Mammary epithelial cell (primary cell): ENCODE measurements at regions of chr3 and their contacts with region 1.

Region 1: DNA sequence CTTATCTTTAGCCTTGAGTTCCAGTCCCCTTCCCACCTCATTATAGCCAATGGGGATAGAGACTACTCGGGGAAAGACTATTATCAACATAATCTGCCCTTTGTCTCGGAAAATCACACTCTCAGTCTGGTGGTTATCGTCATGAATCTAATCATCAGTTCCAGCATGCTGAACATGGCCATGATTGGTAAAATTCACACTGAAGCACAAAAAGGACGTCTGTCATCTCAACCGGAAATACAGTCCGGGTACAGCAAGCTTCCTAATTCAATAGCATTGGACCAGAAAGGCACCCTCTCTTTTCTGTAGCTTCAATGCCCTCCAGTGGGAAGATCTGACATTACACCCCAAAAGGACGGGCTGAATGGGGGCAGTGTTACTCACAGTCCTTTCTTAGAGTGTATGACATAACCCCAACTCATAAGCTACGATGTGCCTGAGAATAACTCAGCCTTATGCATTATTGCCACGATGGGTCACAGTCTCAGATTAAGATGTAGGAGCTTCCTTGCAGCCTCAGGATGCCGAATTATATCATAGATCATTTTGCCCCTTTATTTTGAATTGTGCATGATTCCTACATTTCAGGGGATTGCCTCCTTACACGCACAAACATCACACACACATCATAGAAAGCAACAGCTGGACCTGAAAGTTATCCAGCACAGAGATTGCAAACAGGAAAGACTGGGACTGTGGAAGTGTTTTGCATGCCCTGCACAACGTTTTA is 390.4 kb upstream of the LMCD1 start:
- DNase-seq: peak; percentile 72
- H3K4me3 ChIP-seq: no peak overlapping the region
- H3K27ac ChIP-seq: no peak overlapping the region
- H3K4me1 ChIP-seq: no peaks in the 10 kb centered on the region
- H3K27me3 ChIP-seq: peaks cover 1% of the 10 kb centered on the region
- CTCF ChIP-seq: peak; percentile 69 to 78

Region 2: DNA sequence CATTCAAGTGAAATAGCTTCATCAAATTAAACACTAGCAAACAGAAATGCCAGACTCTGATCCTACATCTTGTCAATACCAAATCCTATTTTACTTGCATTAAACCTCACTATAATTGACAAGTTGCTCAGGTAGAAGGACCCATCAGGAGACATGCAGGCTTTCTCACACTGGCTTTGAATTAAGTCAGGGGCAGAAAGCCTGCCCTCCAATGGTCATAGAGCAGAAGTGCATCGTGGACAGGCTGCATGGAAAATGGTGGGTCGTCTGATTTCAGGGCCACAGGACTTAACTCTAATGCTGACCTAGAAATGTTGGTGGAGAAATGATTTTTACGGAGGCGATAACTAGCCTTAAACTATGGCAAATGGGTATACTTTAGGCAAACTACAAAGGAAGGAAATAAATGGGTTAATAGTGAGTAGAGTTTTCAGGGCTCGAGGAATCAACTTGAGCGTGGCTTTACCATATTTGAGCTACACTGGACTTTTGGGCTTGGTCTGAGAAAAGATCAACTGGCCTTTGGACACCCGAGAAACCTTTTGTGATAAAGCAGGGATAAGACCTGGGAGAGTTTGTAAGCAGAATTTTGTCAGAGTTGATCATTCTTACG is 966.4 kb before region 1 on chr3:
- CTCF ChIA-PET with region 1: no interaction called
- dilution Hi-C with region 1: no loop called
- in situ Hi-C with region 1: no loop called
- intact Hi-C with region 1: loop called (anchors 10 kb)
- DNase-seq: peak; percentile 12
- H3K4me3 ChIP-seq: no peak overlapping the region
- H3K27ac ChIP-seq: no peak overlapping the region
- H3K4me1 ChIP-seq: no peaks in the 10 kb centered on the region
- H3K27me3 ChIP-seq: no peaks in the 10 kb centered on the region
- CTCF ChIP-seq: peak; percentile 49 to 66

Region 3: GRCh38 chr3:7393944-7394605 is 717.2 kb before region 1 on chr3:
- CTCF ChIA-PET with region 1: no interaction called
- dilution Hi-C with region 1: no loop called
- in situ Hi-C with region 1: no loop called
- intact Hi-C with region 1: loop called (anchors 2 kb)
- DNase-seq: no peak
- H3K4me3 ChIP-seq: no peak overlapping the region
- H3K27ac ChIP-seq: no peak overlapping the region
- H3K4me1 ChIP-seq: no peaks in the 10 kb centered on the region
- H3K27me3 ChIP-seq: no peaks in the 10 kb centered on the region
- CTCF ChIP-seq: no peak

Region 4: DNA sequence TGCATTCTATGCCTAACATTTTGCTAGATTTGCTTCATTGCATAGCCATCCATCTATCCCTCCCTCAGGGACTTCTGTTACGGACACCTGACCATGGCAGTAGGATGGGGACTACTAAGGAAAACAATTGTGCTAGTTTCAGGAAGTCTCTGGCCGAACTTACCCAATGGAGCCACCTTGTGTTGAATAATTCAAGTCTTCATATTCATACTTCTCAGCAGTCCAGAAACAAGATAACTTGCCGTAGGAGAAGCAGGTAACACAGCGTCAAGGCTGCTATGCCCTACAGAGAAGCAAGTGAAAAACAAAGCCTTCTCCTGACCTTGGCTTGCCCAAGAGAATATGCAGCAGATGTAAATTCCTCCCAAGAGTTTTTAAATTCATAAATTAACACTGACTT is 565.0 kb before region 1 on chr3:
- CTCF ChIA-PET with region 1: no interaction called
- dilution Hi-C with region 1: no loop called
- in situ Hi-C with region 1: no loop called
- intact Hi-C with region 1: loop called (anchors 2 kb)
- DNase-seq: peak; percentile 24
- H3K4me3 ChIP-seq: no peak overlapping the region
- H3K27ac ChIP-seq: no peak overlapping the region
- H3K4me1 ChIP-seq: no peaks in the 10 kb centered on the region
- H3K27me3 ChIP-seq: no peaks in the 10 kb centered on the region
- CTCF ChIP-seq: peak in 1 of 2 donors; percentile 34

Region 5: GRCh38 chr3:8301728-8302462 is 190.7 kb after region 1 on chr3:
- CTCF ChIA-PET with region 1: interaction called, 3 read pairs
- dilution Hi-C with region 1: no loop called
- in situ Hi-C with region 1: no loop called
- intact Hi-C with region 1: loop called (anchors 1 kb)
- DNase-seq: peak; percentile 30
- H3K4me3 ChIP-seq: no peak overlapping the region
- H3K27ac ChIP-seq: no peak overlapping the region
- H3K4me1 ChIP-seq: no peaks in the 10 kb centered on the region
- H3K27me3 ChIP-seq: peaks cover 2% of the 10 kb centered on the region
- CTCF ChIP-seq: peak; percentile 64 to 69

Region 6: GRCh38 chr3:8336456-8336855 is 225.2 kb after region 1 on chr3:
- CTCF ChIA-PET with region 1: no interaction called
- dilution Hi-C with region 1: no loop called
- in situ Hi-C with region 1: no loop called
- intact Hi-C with region 1: no loop called
- DNase-seq: no peak
- H3K4me3 ChIP-seq: no peak overlapping the region
- H3K27ac ChIP-seq: no peak overlapping the region
- H3K4me1 ChIP-seq: no peaks in the 10 kb centered on the region
- H3K27me3 ChIP-seq: no peaks in the 10 kb centered on the region
- CTCF ChIP-seq: peak in 1 of 2 donors; percentile 7